ENCODE measurements at regions of chr6 and their contacts with region 1.

Region 1: GRCh38 chr6:166333172-166333995 is 9.0 kb downstream of the SFT2D1 start:
- DNase-seq: no peak
- ATAC-seq: no peak

Region 2: GRCh38 chr6:166258854-166259276 is 74.5 kb before region 1 on chr6:
- intact Hi-C with region 1: no loop called
- DNase-seq: peak; percentile 49
- ATAC-seq: peak; percentile 79

Region 3: DNA sequence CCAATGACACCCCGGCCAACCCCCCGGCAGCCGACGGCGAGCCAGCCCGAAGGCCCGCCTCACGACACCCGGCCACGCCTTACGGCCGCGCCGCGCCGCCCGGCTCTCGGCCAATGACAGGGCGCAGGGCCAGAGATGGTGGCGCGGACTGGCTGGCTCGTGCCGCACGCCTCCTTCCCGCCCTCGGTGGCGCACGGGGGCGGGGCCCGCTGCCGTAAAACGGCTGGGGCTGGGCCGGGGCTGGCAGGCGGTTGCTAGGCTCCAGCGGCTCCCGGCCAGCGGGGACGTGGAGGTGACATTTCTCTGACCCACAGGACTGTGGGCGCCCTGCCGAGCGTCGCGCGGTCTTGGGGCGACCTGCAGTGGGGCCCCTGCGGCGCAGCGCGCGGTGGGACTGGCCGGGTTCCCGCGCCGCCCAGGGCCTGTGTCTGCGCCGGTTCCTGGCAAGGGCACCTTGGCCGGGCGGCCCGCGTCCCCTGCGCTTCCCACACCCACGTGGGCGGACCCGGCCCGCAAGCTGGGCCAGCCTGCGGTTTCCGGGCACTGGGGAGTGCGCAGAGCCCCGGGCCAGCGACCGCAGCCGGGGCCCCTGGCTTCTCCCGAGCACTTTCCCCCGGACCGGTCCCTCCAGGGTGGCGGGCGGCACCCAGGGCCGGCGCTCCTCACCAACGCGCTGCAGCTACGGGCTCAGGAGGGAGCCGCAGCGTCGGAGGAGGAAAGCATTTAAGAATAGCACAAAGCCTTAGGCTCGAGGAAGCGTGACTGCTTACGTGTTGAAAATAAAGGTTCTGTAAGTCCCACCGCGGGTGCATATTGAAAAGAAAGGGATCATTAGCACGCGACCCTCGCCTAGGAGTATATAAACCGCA is 49.8 kb after region 1 on chr6 and contains the start of gene MPC1:
- intact Hi-C with region 1: loop called (anchors 10 kb)
- DNase-seq: peak; percentile 99
- ATAC-seq: peak; percentile 96
- total RNA-seq, gene MPC1: 411 TPM

Region 4: GRCh38 chr6:166400181-166400580 is 66.8 kb after region 1 on chr6:
- intact Hi-C with region 1: no loop called
- DNase-seq: no peak
- ATAC-seq: no peak

Measured in left ventricle myocardium superior (tissue), 1 donor.